ENCODE measurements at regions of chr6 and their contacts with region 1.

Region 1: DNA sequence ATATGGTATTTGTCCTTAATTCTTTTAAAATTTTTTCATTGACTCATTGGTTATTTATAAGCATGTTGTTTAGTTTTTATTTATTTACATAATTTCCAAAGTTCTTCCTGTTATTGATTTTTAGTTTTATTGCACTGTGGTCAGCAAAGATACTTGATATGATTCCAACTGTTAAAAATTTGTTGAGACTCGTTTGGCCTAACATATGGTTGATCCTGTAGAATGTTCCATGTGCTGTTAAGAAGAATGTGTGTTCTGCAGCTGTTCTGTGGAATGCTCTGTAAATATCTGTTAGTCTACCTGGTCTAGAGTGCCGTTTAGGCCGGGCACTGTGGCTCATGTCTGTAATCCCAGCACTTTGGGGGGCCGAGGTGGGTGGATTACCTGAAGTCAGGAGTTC is 197.7 kb downstream of the CD109 start:
- DNase-seq: peak in 1 of 3 donors; percentile 22
- ATAC-seq: no peak
- H3K4me3 ChIP-seq: no peak overlapping the region
- H3K27ac ChIP-seq: no peak overlapping the region
- H3K4me1 ChIP-seq: no peaks in the 10 kb centered on the region
- H3K27me3 ChIP-seq: no peaks in the 10 kb centered on the region

Region 2: DNA sequence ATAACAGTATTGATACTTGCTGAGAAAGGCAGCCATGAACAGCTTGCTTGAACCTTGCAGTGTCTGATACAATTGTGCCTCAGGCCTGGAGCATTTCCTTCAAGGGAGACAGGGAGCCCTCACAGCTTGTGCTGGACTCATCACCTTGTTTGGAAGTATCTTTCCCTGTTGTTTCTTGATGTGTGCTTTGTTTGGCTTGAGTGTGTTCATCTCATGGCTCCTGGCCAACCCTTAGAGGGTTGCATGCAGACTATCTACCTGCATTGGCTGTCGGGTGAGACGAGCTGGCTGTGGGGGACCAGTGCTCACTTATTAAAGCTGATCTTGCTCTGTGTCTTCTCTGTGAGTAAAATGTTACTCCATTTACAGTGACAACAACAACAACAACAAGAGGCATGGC is 17.7 kb before region 1 on chr6:
- intact Hi-C with region 1: loop called in 1 of 4 experiments (anchors 2 kb)
- DNase-seq: no peak
- ATAC-seq: no peak
- H3K4me3 ChIP-seq: no peak overlapping the region
- H3K27ac ChIP-seq: no peak overlapping the region
- H3K4me1 ChIP-seq: no peaks in the 10 kb centered on the region
- H3K27me3 ChIP-seq: no peaks in the 10 kb centered on the region